K562 (cell line): ENCODE measurements at regions of chr12 and their contacts with region 1.

Region 1: GRCh38 chr12:75526655-75527511 is 15.5 kb upstream of the KRR1 start:
- DNase-seq: peak; percentile 19 to 52 (median 25)
- ATAC-seq: peak; percentile 70
- H3K4me3 ChIP-seq: no peak overlapping the region
- H3K27ac ChIP-seq: no peak overlapping the region
- H3K4me1 ChIP-seq: no peaks in the 10 kb centered on the region
- H3K27me3 ChIP-seq: no peaks in the 10 kb centered on the region
- CTCF ChIP-seq: peak; percentile 28 to 70 (median 65); a peak in 5 of 6 replicates
- EP300 ChIP-seq: no peak
- POLR2A ChIP-seq: no peak
- RAD21 ChIP-seq: peak; percentile 89 to 90

Region 2: DNA sequence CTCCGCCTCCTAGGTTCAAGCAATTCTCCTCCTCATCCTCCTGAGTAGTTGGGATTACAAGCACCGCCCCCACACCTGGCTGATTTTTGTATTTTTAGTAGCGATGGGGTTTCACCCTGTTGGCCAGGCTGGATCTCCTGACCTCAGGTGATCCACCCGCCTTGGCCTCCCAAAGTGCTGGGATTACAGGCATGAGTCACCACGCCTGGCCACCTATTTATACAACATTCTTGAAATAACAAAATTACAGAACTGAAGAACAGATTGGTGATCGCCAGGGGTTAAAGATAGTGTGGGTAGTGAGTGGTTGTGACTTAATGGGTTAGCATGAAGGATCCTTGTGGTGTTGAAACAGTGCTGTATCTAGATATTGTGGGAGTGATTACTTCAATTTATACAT is 185.1 kb before region 1 on chr12:
- CTCF ChIA-PET with region 1: no interaction called
- POLR2A ChIA-PET with region 1: no interaction called
- in situ Hi-C with region 1: no loop called
- intact Hi-C with region 1: no loop called
- DNase-seq: peak in 1 of 4 experiments; percentile 3
- ATAC-seq: peak; percentile 42; the same call in 2 of the 3 replicates
- H3K4me3 ChIP-seq: no peak overlapping the region
- H3K27ac ChIP-seq: no peak overlapping the region
- H3K4me1 ChIP-seq: no peaks in the 10 kb centered on the region
- H3K27me3 ChIP-seq: no peaks in the 10 kb centered on the region
- CTCF ChIP-seq: no peak
- EP300 ChIP-seq: no peak
- POLR2A ChIP-seq: no peak
- RAD21 ChIP-seq: no peak

Region 3: GRCh38 chr12:75722714-75723200 is 195.9 kb after region 1 on chr12:
- CTCF ChIA-PET with region 1: no interaction called
- POLR2A ChIA-PET with region 1: no interaction called
- in situ Hi-C with region 1: no loop called
- intact Hi-C with region 1: loop called (anchors 10 kb)
- DNase-seq: peak in 3 of 4 experiments; percentile 15 to 63 (median 16)
- ATAC-seq: peak; percentile 67
- H3K4me3 ChIP-seq: no peak overlapping the region
- H3K27ac ChIP-seq: peak overlapping the region; percentile 48; the same call in 1 of the 3 replicates
- H3K4me1 ChIP-seq: peaks cover 0 to 28% of the 10 kb centered on the region in 2 experiments; a peak in 3 of 5 replicates
- H3K27me3 ChIP-seq: no peaks in the 10 kb centered on the region
- CTCF ChIP-seq: no peak
- EP300 ChIP-seq: no peak
- POLR2A ChIP-seq: no peak
- RAD21 ChIP-seq: no peak

Region 4: GRCh38 chr12:76037130-76038103 is 510.5 kb after region 1 on chr12:
- CTCF ChIA-PET with region 1: interaction called, 14 read pairs
- POLR2A ChIA-PET with region 1: no interaction called
- in situ Hi-C with region 1: no loop called
- intact Hi-C with region 1: loop called (anchors 1 kb)
- DNase-seq: peak; percentile 58 to 80 (median 62)
- ATAC-seq: peak; percentile 77
- H3K4me3 ChIP-seq: no peak overlapping the region
- H3K27ac ChIP-seq: no peak overlapping the region
- H3K4me1 ChIP-seq: peaks cover 12 to 35% of the 10 kb centered on the region in 2 experiments; a peak in 4 of 5 replicates
- H3K27me3 ChIP-seq: no peaks in the 10 kb centered on the region
- CTCF ChIP-seq: peak; percentile 70 to 91 (median 82)
- EP300 ChIP-seq: no peak
- POLR2A ChIP-seq: no peak
- RAD21 ChIP-seq: peak; percentile 94 to 96